ENCODE measurements at regions of chr12 and their contacts with region 1.

Region 1: DNA sequence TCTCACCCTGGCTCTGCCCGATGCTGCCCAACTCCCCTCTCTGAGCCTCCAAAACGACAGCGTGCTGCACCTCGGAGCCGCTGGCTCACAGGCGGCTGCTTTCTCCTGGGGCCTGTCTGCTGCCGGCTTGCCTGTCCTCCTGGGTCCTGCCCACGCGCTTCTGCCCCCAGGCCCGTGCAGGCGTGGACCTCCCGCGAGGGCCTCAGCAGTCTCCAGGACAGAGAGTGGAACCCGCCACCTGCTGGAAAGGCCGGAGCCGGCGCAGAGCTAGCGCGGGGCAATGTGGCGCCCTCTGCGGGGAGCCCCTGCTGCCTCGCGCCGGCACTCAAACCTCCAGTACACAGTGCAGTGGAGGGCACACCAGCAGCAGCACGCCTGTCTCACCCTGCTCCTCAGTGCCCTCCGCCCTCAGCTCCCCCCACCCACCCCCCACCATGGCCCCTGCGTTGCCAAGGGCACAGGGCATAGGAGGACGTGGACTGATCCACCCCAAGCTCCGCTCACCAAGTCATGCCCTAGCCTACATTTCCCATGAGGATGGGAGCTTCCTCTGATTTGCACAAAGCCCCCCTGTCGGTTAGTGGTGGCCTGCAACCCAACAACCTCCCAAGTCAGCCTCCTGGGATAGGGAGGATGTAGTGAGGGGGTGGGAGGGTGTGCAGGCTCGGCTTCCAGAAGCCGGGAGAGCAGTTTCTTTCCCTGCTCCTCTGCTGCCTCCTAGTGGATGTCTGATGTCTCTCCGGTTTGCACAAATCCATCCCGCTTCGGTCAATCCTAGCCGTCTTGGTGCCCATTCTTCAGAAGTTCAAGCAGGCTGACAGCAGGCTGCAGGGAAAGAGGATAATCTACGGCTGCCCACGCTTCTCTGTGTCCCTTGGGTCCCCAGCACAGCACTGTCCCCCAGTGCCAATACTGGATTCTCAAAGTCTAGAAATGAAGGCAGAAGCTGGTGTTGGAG is 25.2 kb downstream of the KRT8 start:
- DNase-seq: peak; percentile 81
- H3K4me3 Mint-ChIP-seq: peak overlapping the region; percentile 19
- H3K27ac Mint-ChIP-seq: no peak overlapping the region
- H3K4me1 Mint-ChIP-seq: peaks cover 14% of the 10 kb centered on the region
- H3K27me3 Mint-ChIP-seq: peaks cover 11% of the 10 kb centered on the region

Region 2: DNA sequence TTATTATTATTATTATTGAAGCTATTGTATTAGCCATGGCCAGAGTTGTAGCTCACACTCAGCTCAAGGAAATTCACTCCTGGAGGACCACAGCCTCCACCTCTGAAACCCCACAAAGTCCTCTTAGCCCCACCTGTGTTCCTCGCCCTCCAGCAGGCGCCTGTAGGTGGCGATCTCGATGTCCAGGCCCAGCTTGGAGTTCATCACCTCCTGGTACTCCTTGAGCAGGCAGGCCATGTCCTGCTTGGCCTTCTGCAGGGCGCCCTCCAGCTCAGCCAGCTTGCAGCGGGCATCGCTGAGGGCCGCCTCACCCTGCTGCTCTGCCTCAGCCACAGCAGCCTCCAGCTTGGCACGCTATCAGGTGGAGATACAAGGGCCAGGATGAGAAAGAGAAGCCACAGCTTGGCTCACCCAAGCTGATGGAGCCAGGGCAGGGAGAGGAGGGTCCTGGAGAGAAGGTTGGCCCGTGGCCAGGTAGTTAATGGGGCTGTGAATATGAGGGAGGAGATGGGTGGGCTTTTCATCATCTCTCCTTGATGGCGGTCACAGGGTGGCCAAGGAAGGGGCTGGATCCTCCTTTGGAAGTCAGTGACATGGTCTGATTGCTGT is 517.5 kb before region 1 on chr12:
- CTCF ChIA-PET with region 1: interaction called, 11 read pairs
- POLR2A ChIA-PET with region 1: no interaction called
- DNase-seq: no peak
- H3K4me3 Mint-ChIP-seq: no peak overlapping the region
- H3K27ac Mint-ChIP-seq: no peak overlapping the region
- H3K4me1 Mint-ChIP-seq: peaks cover 16% of the 10 kb centered on the region
- H3K27me3 Mint-ChIP-seq: peaks cover 10% of the 10 kb centered on the region

Region 3: GRCh38 chr12:52582971-52583456 is 296.7 kb before region 1 on chr12:
- CTCF ChIA-PET with region 1: interaction called, 134 read pairs
- POLR2A ChIA-PET with region 1: interaction called, 8 read pairs
- DNase-seq: peak; percentile 66
- H3K4me3 Mint-ChIP-seq: no peak overlapping the region
- H3K27ac Mint-ChIP-seq: no peak overlapping the region
- H3K4me1 Mint-ChIP-seq: peaks cover 18% of the 10 kb centered on the region
- H3K27me3 Mint-ChIP-seq: peaks cover 3% of the 10 kb centered on the region

Region 4: DNA sequence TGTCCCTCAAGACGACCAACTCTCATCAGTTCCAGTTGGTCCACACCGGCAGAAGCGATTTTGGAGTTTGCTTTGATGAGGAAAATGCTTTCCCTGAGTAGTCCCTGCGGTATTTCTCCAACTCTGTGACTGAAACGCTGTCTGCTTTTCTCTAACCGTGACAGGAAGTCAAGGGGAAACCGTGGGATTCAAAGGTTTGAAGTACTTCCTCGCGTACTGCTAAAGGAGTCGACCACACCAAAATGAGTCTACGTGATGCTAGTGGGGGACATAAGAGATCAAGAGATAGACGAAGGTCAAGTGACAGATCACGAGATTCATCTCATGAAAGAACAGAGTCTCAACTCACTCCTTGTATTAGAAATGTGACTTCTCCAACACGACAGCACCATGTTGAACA is 131.1 kb before region 1 on chr12:
- CTCF ChIA-PET with region 1: no interaction called
- POLR2A ChIA-PET with region 1: no interaction called
- DNase-seq: no peak
- H3K4me3 Mint-ChIP-seq: no peak overlapping the region
- H3K27ac Mint-ChIP-seq: no peak overlapping the region
- H3K4me1 Mint-ChIP-seq: peaks cover 4% of the 10 kb centered on the region
- H3K27me3 Mint-ChIP-seq: peaks cover 11% of the 10 kb centered on the region

Region 5: DNA sequence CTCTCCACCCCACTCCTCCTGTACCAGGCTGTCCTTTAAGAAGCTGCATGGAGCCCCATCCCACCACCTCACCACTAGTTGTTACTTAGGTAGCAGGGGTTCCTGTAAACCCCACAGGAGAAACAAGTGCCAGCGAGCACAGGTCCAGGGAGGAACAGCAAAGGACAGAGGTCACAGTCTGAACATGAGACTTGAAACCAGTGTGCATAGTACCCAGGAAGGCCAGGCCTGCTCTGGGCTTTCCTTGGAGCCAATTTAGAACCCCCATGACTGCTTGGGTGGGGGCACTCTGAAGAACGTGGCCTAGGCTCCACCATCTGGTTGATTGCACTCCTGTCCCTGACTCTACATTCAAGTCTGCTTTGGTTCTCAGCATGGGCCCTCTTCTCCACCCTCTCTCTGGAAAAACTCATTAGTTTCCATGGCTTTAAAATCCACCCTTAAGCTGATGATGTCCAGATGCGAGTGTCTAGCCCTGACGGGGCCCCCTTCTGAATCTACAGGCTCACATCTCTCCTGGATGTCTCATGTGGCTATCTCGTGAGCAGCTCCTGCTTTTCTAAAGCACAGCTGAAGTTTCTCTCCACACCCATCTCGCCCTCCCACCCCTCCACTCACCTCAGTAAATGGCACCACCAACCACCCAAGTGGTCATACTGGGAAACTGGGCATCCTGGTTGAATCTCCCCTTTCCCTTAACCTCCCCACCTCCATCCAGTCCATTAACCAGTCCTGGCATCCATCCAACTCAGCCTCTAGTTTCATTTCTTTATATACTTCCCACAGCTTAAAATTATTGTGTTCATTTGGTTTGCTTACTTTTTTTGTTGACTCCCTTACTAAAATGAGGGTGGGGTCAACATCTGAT is 92.1 kb before region 1 on chr12:
- CTCF ChIA-PET with region 1: no interaction called
- POLR2A ChIA-PET with region 1: no interaction called
- DNase-seq: no peak
- H3K4me3 Mint-ChIP-seq: no peak overlapping the region
- H3K27ac Mint-ChIP-seq: no peak overlapping the region
- H3K4me1 Mint-ChIP-seq: no peaks in the 10 kb centered on the region
- H3K27me3 Mint-ChIP-seq: peaks cover 51% of the 10 kb centered on the region

Region 6: DNA sequence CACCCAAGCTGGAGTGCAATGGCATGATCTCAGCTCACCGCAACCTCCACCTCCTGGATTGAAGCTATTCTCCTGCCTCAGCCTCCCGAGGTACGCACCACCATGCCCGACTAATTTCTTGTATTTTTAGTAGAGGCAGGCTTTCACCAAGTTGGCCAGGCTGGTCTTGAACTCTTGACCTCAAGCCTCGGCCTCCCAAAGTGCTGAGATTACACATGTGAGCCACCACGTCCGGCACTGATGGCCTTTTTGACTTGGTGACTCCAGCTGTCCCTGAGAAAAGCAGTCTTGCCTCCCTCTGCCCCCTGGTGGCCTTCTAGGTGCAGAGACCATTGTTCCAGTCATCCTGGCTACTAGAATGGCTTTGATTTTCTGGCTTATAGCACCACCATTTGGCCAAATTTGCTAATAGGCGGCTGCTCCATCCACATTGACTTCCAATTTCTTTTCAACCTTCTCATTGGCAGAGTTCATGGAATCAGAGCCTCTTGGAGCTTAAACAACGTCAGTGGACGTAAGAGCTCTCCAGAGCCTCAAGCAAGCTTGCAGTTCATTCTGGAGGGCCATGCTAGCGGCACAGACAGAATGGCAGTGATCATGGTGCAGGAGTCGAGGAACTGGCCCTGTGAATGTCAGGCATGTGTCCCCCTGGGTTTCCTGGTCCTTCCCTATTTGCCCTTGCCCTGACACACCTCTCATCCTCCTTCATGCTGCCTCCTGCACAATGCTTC is 101.2 kb after region 1 on chr12:
- CTCF ChIA-PET with region 1: interaction called, 318 read pairs
- POLR2A ChIA-PET with region 1: interaction called, 10 read pairs
- DNase-seq: peak; percentile 85
- H3K4me3 Mint-ChIP-seq: no peak overlapping the region
- H3K27ac Mint-ChIP-seq: no peak overlapping the region
- H3K4me1 Mint-ChIP-seq: peaks cover 2% of the 10 kb centered on the region
- H3K27me3 Mint-ChIP-seq: peaks cover 38% of the 10 kb centered on the region

Region 7: DNA sequence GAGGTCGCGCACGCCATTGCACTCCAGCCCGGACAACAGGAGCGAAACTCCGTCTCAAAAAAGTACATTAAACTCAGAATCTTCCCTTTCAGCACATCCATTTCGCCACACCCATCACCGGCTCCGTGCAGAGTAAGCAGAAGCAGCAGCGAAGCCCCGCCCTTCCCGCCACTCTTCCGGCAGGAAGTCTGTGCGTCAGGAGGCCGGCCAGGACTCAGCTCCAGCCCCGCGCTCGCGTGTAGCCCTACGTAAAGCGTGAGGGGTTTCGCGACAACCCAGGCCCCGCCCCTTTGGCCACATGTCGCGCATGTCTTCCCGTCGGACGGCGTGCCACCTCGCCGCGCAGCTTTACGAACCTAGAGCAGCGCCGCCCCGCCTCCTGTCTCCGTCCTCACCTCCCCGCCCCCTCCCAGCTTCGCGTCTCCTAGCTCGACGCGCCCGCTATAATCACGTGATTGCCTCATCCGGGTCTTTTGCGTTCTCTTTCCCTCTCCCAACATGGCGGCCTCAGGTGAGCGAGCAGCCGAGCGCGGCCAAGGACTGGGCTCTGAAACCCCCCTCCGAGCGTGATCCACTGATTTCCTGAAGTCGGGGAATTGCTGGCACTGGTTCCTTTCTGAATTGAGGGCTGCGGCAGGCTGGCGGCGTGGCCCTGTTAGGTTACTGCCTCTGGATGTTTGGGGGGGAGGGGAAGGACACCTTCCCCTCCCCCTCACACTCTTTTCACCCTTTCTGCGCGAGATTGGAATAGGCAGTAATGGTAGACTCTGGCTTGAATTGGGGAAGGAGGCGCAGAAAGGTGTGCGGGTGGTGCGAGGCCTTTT is 126.5 kb after region 1 on chr12 and contains the start of gene EIF4B:
- CTCF ChIA-PET with region 1: interaction called, 12 read pairs
- POLR2A ChIA-PET with region 1: interaction called, 3 read pairs
- DNase-seq: peak; percentile 100
- H3K4me3 Mint-ChIP-seq: peak within 1 kb of the TSS; percentile 97
- H3K27ac Mint-ChIP-seq: peak within 1 kb of the TSS; percentile 96
- H3K4me1 Mint-ChIP-seq: peaks cover 49% of the 10 kb centered on the region
- H3K27me3 Mint-ChIP-seq: peaks cover under 1% of the 10 kb centered on the region
- total RNA-seq, gene EIF4B: 303 to 311 TPM

Region 8: DNA sequence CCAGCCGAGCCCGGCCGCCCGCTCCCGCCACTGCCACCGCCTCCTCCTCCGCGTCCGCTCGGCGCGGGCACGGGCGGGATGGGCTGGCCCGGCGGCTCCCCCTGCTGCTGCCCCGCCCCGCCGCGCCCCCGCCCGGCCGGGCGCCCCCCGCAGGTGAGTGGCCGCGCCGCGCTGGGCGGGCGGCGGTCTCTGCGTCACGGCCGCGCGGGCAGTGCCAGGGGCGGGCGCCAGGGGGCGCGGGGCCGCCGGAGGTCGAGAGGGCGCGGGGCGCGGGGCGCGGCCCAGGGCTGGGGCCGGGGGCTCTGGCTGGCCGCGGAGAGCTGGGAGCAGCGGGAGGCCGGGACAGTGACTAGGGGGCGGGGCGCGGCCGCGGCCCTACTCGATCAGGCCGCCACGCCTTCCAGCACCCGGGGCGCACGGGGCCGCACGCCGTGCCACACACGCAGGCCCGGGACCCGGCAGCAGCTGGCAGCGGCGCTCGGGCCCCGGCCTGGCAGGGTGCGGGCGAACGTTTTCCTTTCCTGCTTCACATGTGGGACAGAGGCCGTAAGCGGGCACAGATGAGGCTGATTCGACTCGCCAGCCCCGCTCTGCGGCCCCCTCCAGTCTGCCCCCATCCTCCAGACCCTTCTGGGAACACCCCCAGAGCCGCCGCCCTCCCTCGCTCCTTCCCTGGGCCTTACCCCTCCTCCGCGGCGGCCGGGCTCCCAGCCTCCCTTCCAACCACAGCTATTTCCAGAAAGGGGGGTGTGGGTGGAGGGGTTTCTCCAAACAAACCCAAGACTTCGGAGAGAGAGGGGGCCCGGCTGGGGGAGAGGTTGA is 167.8 kb after region 1 on chr12:
- CTCF ChIA-PET with region 1: no interaction called
- POLR2A ChIA-PET with region 1: no interaction called
- DNase-seq: peak; percentile 70
- H3K4me3 Mint-ChIP-seq: peak overlapping the region; percentile 92
- H3K27ac Mint-ChIP-seq: no peak overlapping the region
- H3K4me1 Mint-ChIP-seq: peaks cover 17% of the 10 kb centered on the region
- H3K27me3 Mint-ChIP-seq: peaks cover 13% of the 10 kb centered on the region